ENCODE measurements at regions of chr13 and their contacts with region 1.

Region 1: GRCh38 chr13:41075034-41075433 is 13.7 kb downstream of the WBP4 start:
- DNase-seq: peak in 7 of 9 donors; percentile 15 to 58 (median 51)
- ATAC-seq: peak; percentile 63
- H3K4me3 ChIP-seq: no peak overlapping the region
- H3K4me3 Mint-ChIP-seq: no peak overlapping the region
- H3K27ac ChIP-seq: no peak overlapping the region
- H3K27ac Mint-ChIP-seq: no peak overlapping the region
- H3K4me1 ChIP-seq: no peaks in the 10 kb centered on the region
- H3K4me1 Mint-ChIP-seq: no peaks in the 10 kb centered on the region
- H3K27me3 ChIP-seq: no peaks in the 10 kb centered on the region
- H3K27me3 Mint-ChIP-seq: no peaks in the 10 kb centered on the region

Region 2: DNA sequence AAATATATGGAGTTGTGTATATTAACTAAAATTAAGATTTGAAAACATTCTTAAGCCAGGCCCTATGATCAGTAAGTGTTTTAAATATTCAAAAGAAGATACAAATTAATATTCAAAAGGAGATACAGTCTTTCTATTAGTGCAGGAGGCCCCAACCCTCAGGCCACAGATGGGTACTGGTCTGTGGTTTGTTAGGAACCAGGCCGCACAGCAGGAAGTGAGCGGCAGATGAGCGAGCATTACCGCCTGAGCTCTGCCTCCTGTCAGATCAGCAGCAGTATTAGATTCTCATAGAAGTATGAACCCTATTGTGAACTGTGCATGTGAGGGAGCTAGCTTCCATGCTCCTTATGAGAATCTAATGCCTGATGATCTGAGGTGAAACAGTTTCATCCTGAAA is 641.5 kb before region 1 on chr13:
- CTCF ChIA-PET with region 1: no interaction called
- POLR2A ChIA-PET with region 1: no interaction called
- intact Hi-C with region 1: no loop called
- DNase-seq: peak in 6 of 9 donors; percentile 8 to 35 (median 25)
- ATAC-seq: peak; percentile 74
- H3K4me3 ChIP-seq: no peak overlapping the region
- H3K4me3 Mint-ChIP-seq: peak overlapping the region in 8 of 10 donors; percentile 4 to 68 (median 62)
- H3K27ac ChIP-seq: no peak overlapping the region
- H3K27ac Mint-ChIP-seq: peak overlapping the region in 8 of 9 donors; percentile 41 to 94 (median 82)
- H3K4me1 ChIP-seq: peaks cover 24 to 56% of the 10 kb centered on the region in 2 donors
- H3K4me1 Mint-ChIP-seq: peaks cover 29 to 78% (median 69%) of the 10 kb centered on the region in 7 donors
- H3K27me3 ChIP-seq: no peaks in the 10 kb centered on the region
- H3K27me3 Mint-ChIP-seq: no peaks in the 10 kb centered on the region

Region 3: GRCh38 chr13:40819797-40820315 is 255.2 kb before region 1 on chr13:
- CTCF ChIA-PET with region 1: no interaction called
- POLR2A ChIA-PET with region 1: no interaction called
- intact Hi-C with region 1: no loop called
- DNase-seq: no peak
- ATAC-seq: no peak
- H3K4me3 ChIP-seq: no peak overlapping the region
- H3K4me3 Mint-ChIP-seq: no peak overlapping the region
- H3K27ac ChIP-seq: no peak overlapping the region
- H3K27ac Mint-ChIP-seq: peak overlapping the region in 1 of 9 donors; percentile 24
- H3K4me1 ChIP-seq: no peaks in the 10 kb centered on the region
- H3K4me1 Mint-ChIP-seq: peaks cover 0 to 14% (median 0%) of the 10 kb centered on the region in 7 donors
- H3K27me3 ChIP-seq: no peaks in the 10 kb centered on the region
- H3K27me3 Mint-ChIP-seq: no peaks in the 10 kb centered on the region

Region 4: DNA sequence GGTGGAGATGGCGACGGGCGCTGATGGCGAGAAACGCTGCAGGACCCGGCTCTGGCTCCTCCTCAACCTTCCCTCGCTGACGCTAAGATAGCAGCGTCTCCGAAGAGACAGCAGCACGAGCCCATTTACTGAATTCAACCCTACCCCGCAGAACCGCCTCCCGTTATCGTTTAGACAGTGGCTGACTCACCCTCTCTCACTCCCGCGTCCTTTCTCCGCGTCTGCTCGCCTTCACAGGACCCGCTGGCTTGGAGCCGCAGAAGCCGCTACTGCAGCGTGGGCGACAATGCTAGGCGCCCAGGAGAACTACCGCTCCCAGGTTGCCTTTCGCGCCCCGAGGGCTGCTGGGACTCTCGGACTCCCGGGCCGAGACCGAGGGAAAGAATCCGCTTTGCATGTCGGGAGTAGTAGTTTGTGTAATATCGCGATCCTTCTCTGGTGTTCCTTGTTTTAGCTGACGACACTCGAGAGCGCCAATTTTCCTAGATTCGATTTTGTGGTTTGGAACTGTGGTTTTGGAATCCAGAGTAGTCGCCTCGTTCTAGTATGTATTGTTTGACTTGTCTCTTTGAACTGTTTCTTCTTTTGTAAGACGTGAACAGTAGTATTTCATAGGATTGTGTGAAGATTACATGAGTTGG is 57.6 kb after region 1 on chr13 and contains the start of gene KBTBD6:
- CTCF ChIA-PET with region 1: no interaction called
- POLR2A ChIA-PET with region 1: no interaction called
- intact Hi-C with region 1: loop called in 1 of 2 experiments (anchors 5 kb)
- DNase-seq: peak; percentile 76 to 93 (median 87)
- ATAC-seq: peak; percentile 98
- H3K4me3 ChIP-seq: peak within 1 kb of the TSS; percentile 77
- H3K4me3 Mint-ChIP-seq: peak within 1 kb of the TSS; percentile 94 to 99 (median 98)
- H3K27ac ChIP-seq: peak within 1 kb of the TSS; percentile 67
- H3K27ac Mint-ChIP-seq: peak within 1 kb of the TSS; percentile 91 to 97 (median 93)
- H3K4me1 ChIP-seq: peaks cover 15 to 24% of the 10 kb centered on the region in 2 donors
- H3K4me1 Mint-ChIP-seq: peaks cover 32 to 60% (median 54%) of the 10 kb centered on the region in 7 donors
- H3K27me3 ChIP-seq: no peaks in the 10 kb centered on the region
- H3K27me3 Mint-ChIP-seq: no peaks in the 10 kb centered on the region
- total RNA-seq, gene KBTBD6: 3.9 to 9.2 (median 7.7) TPM